OCI-LY7 (cell line): ENCODE measurements at regions of chr11 and their contacts with region 1.

Region 1: GRCh38 chr11:18395735-18396504 is 1.6 kb downstream of the LDHA start:
- DNase-seq: peak; percentile 98
- H3K4me3 ChIP-seq: peak overlapping the region; percentile 89
- H3K27ac ChIP-seq: peak overlapping the region; percentile 90
- H3K4me1 ChIP-seq: peaks cover 30% of the 10 kb centered on the region
- CTCF ChIP-seq: no peak

Region 2: DNA sequence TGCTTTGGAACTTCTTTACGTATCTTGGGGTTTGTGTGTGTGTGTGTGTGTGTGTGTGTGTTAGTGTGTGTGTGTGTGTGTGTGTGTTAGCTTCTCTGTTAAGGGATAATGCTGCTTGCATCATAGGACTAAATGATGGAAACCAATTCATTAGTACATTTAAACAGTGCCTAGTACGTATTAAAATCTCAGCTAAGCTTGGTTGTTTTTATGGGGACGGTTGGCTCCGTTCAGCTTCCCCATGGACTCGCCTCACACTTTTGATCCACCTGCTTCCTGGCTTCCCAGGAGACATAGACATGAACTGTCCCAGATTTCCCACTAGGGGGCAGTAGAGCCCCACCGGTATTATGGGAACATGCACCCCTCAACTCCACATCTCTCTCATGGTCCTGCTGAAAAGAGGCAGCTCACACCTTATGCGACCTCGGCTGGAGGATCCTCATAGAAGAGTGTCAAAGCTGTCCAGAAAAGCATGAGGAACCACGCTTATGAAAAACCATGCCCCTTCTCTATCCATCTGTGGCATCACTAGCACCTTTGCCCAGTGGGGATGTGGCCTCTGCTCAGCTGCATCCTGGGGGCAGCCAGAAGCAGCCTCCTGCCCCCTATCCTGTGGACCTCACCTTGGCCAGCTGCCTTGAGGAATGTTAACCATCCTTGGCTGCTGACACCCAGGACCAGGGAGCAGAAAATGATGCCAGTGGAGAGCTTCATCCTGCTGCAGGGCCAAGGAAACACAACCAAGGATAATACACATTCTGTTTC is 280.4 kb before region 1 on chr11:
- CTCF ChIA-PET with region 1: no interaction called
- POLR2A ChIA-PET with region 1: interaction called, 6 read pairs
- intact Hi-C with region 1: loop called (anchors 10 kb)
- DNase-seq: peak; percentile 85
- H3K4me3 ChIP-seq: no peak overlapping the region
- H3K27ac ChIP-seq: no peak overlapping the region
- H3K4me1 ChIP-seq: peaks cover 8% of the 10 kb centered on the region
- CTCF ChIP-seq: peak; percentile 97

Region 3: DNA sequence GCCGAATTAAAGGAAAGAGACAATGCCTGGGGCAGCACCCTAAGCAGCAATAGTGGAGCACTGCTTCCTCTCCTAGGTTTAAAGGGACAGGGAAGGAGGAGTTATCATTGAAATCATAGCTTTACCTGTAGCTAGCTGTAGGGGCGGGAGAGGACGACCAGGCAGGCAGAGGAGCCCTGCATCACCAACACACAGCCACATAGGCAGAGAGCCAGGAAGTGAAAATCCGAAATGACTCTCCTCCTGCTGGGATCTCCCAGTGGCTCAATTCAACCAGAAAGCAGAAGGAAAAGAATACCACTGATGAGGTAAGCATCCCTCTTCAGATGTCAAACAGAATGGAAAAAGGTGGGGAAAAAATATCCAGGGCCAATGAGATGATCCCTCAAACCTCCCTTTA is 202.9 kb before region 1 on chr11:
- CTCF ChIA-PET with region 1: no interaction called
- POLR2A ChIA-PET with region 1: no interaction called
- intact Hi-C with region 1: no loop called
- DNase-seq: peak; percentile 16
- H3K4me3 ChIP-seq: no peak overlapping the region
- H3K27ac ChIP-seq: no peak overlapping the region
- H3K4me1 ChIP-seq: peaks cover 7% of the 10 kb centered on the region
- CTCF ChIP-seq: no peak

Region 4: DNA sequence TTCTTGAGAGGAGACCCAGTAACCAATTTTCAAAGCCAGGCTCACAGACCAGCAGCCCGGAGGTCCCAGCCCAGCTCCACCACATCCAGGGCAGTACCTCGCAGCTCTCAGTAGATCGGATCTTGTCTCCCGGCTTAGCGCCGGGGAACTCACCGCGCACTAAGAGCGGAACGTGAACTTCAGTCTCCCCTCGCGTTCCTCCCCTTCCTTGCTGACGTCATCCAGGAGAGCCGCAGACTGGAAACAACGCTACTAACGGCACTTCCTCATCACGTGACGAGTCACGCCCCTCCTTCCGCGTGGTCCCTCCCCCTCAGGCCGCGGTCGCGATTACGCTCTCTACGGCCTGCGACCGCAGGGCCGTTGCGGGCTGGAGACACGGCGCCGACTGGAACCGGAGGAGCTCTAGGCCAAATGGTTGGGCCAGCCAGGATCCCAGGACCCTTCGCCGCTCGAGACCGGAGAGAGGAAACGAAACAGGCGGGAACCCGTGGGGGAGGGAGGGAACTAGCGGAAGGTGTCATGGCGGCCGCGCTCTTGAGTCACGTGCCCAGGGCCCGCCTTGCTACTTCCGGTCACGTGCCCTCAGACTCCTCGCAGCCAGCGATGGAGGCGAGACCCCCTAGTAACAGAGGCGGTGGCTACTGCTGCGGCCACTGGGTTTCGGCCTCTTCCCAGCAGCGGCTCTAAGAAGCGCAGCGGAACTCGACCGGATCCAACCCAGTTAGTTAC is 73.8 kb before region 1 on chr11 and contains the starts of genes GTF2H1 and HPS5:
- CTCF ChIA-PET with region 1: interaction called, 3 read pairs
- POLR2A ChIA-PET with region 1: interaction called, 31 read pairs
- intact Hi-C with region 1: loop called (anchors 1 kb)
- DNase-seq: peak; percentile 99
- H3K4me3 ChIP-seq: peak within 1 kb of the TSS; percentile 87
- H3K27ac ChIP-seq: peak within 1 kb of the TSS; percentile 79
- H3K4me1 ChIP-seq: peaks cover 40% of the 10 kb centered on the region
- CTCF ChIP-seq: no peak
- total RNA-seq, gene GTF2H1: 48.0 and 53.1 TPM in 2 replicates
- total RNA-seq, gene HPS5: 23.0 and 31.1 TPM in 2 replicates

Region 5: GRCh38 chr11:18383388-18384156 is 12.3 kb before region 1 on chr11:
- CTCF ChIA-PET with region 1: interaction called, 5 read pairs
- POLR2A ChIA-PET with region 1: interaction called, 56 read pairs
- intact Hi-C with region 1: no loop called
- DNase-seq: peak; percentile 16
- H3K4me3 ChIP-seq: no peak overlapping the region
- H3K27ac ChIP-seq: peak overlapping the region; percentile 11
- H3K4me1 ChIP-seq: peaks cover 14% of the 10 kb centered on the region
- CTCF ChIP-seq: no peak

Region 6: GRCh38 chr11:18438691-18439090 is 42.8 kb after region 1 on chr11:
- CTCF ChIA-PET with region 1: no interaction called
- POLR2A ChIA-PET with region 1: no interaction called
- intact Hi-C with region 1: no loop called
- DNase-seq: no peak
- H3K4me3 ChIP-seq: no peak overlapping the region
- H3K27ac ChIP-seq: no peak overlapping the region
- H3K4me1 ChIP-seq: no peaks in the 10 kb centered on the region
- CTCF ChIP-seq: no peak

Region 7: GRCh38 chr11:18548001-18548400 is 152.1 kb after region 1 on chr11:
- CTCF ChIA-PET with region 1: no interaction called
- POLR2A ChIA-PET with region 1: no interaction called
- intact Hi-C with region 1: no loop called
- DNase-seq: no peak
- H3K4me3 ChIP-seq: no peak overlapping the region
- H3K27ac ChIP-seq: no peak overlapping the region
- H3K4me1 ChIP-seq: no peaks in the 10 kb centered on the region
- CTCF ChIP-seq: no peak

Region 8: DNA sequence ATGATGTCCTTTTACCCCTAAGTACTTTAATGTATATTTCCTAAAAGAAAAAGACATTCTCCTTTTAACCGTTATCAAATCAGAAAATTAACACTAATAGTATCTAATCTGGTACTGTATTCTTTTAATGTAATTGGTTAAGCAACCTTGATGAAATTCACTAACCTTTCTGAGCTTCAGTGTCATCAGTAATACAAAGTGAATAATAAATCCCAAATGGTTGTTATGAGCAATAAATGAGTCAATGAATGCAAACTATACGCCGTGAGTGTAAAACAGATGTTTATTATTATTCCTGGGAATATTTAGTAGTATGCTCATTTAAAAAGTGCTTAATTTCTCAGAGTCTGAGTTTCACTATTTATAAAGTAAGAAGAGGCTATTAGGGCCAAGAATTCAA is 171.2 kb after region 1 on chr11:
- CTCF ChIA-PET with region 1: no interaction called
- POLR2A ChIA-PET with region 1: no interaction called
- intact Hi-C with region 1: no loop called
- DNase-seq: no peak
- H3K4me3 ChIP-seq: no peak overlapping the region
- H3K27ac ChIP-seq: no peak overlapping the region
- H3K4me1 ChIP-seq: no peaks in the 10 kb centered on the region
- CTCF ChIP-seq: no peak